RWPE1 (cell line): ENCODE measurements at regions of chr18 and their contacts with region 1.

Region 1: DNA sequence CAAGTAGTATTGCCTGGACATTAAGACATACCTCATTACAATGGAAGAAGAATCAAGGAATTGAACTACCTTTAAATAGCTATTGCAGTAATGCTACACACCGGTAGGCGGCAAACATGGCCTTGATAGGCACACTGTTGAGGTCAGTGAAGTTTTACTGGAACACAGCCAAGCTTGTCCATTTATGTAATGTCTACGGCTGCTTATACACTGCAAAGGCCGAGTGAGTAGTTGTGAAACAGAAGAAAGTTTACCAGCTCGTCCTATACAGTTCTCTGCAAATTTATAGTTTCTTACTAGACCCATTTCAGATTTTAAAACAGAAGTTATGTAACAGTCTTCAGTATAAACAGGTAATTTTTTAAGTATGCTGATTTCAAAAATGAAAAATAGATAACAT is 38.8 kb downstream of the PPP4R1 start:
- DNase-seq: peak; percentile 72
- H3K27ac ChIP-seq: no peak overlapping the region
- CTCF ChIP-seq: peak; percentile 95

Region 2: DNA sequence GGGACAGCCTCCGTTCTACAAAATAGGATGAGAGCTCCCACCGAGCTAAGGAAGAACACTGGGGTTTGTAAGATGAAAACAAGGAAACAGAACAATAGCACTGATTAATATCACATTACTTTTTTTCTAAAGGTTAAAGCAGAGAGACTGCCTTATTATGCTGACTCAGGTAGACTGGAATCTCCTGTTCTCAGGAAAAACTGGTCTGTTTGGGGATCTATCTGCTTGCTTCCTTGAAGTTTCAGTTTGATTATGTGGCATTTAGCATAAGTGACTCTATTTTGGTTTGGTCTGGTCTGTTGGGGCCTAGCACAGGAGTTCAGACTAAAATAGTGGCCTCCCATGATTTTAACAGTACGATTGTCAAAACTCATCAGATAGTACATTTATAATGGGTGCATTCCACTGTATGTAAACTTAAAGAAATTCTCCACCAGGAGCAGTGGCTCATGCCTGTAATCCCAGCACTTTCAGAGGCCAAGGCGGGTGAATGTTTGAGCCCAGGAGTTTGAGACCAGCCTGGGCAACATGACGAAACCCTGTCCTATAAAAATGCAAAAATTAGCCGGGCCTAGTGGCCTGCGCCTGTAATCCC is 537.2 kb before region 1 on chr18:
- CTCF ChIA-PET with region 1: no interaction called
- POLR2A ChIA-PET with region 1: interaction called, 10 read pairs
- DNase-seq: no peak
- H3K27ac ChIP-seq: no peak overlapping the region
- CTCF ChIP-seq: no peak